Activated CD4-positive, alpha-beta memory T cell treated with anti-CD3 and anti-CD28 coated beads, Interleukin-2, amount 10 ng/mL, durations not matched to agents 7 days and 5 days (primary cell): ENCODE measurements at regions of chr13 and their contacts with region 1.

Region 1: DNA sequence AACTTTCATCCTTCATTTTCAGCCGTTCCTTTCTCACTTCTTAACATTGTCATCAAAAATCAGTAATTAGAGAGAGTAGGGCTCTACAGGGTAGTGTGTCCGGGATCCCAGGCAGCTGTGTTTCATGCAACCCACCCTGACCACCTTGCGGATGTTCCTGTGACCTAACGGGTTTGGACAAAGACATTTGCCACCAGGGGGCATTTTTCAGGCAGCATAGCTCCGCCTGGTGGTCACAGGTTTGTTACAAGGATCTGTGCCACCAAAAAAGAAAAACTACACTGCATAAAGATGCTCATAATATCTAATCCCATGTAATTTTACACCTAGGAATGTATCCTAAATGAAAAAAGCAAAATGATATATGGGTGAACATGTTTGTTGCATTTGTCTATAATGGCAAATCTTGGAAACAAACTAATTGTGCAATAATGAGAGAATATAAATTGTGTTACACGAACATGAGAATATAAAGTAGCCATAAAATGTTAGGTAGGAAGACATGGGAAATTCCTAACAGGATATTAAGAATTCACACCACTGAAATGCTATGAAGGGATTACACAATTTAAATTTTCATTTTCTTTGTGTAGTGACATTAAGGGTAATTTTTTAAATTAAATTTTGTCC is 123.0 kb downstream of the SLC7A1 start:
- DNase-seq: peak; percentile 59
- H3K4me3 Mint-ChIP-seq: no peak overlapping the region
- H3K27ac Mint-ChIP-seq: no peak overlapping the region
- H3K4me1 Mint-ChIP-seq: peaks cover 2% of the 10 kb centered on the region
- H3K27me3 Mint-ChIP-seq: peaks cover 12% of the 10 kb centered on the region

Region 2: DNA sequence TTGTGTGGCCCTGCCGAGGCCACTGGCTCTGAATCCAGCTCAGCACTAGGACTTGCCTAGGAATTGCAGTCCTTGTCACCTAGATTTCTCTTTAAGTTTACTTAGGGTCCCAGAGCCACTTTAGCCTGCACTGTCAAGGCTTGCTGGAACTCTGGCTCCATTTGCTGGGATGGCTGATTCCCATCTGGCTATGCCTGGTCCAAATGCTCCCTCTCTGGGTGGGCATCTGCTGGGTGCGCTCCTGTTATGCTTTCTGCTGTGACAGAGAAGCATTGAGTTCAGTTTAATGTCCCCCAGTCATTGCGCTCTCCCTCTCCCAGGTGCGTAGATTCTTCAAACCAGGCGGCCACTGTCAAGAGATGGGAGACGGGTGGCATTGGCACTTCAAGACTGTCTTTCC is 550.1 kb before region 1 on chr13:
- CTCF ChIA-PET with region 1: no interaction called
- POLR2A ChIA-PET with region 1: no interaction called
- DNase-seq: no peak
- H3K4me3 Mint-ChIP-seq: no peak overlapping the region
- H3K27ac Mint-ChIP-seq: no peak overlapping the region
- H3K4me1 Mint-ChIP-seq: no peaks in the 10 kb centered on the region
- H3K27me3 Mint-ChIP-seq: no peaks in the 10 kb centered on the region

Region 3: DNA sequence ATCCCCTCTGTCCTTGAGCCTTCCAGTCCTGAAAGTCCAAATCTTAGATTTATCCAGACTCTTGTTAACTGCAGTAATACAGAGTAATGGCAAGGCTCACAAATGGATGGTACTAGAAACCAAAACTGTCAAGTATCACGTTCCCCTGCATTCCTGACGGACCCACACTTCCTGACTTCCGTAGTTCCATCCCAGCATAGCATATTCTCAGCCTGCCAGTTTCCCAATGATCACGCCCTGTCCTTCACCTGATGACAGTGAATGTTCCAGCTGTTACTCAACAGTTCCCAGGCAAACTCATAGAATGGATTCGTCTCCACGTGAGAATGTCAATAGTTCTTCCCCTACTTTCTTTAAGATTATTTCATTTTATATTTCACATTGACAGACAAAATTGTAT is 89.5 kb after region 1 on chr13:
- CTCF ChIA-PET with region 1: no interaction called
- POLR2A ChIA-PET with region 1: no interaction called
- DNase-seq: no peak
- H3K4me3 Mint-ChIP-seq: no peak overlapping the region
- H3K27ac Mint-ChIP-seq: no peak overlapping the region
- H3K4me1 Mint-ChIP-seq: peaks cover 16% of the 10 kb centered on the region
- H3K27me3 Mint-ChIP-seq: no peaks in the 10 kb centered on the region

Region 4: DNA sequence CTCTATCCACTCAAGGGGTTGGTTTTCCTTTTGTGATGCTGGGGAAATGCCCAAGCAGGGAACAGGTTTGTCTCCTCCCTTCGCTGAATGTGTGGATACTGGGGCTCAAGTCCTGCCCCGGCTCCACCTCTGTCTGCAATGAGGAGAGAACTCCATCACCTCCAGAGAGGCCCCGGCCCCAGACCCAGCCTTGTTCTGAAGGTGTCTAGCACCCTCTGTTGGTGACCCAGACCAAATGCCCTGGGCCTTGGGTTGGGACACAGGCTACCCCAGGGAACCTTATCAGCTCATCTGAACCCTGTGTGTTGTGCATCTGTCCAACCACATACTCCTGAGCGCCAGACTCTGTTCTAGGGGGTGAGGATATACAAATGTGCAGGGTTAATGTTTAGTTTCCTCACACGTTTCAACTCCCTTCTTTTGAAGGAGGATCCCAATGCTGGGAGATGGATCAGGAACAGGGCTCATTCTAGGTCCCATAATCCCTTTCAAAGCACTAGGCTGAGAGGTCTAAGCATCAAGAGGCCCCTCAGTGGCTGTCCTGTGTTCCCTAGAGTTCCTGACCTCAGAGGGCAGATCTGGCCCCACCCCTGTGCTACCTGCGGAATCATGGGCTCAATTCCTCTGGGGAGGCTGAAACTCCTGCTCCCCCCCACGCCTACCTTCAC is 235.6 kb after region 1 on chr13:
- CTCF ChIA-PET with region 1: interaction called, 21 read pairs
- POLR2A ChIA-PET with region 1: no interaction called
- DNase-seq: peak; percentile 43
- H3K4me3 Mint-ChIP-seq: no peak overlapping the region
- H3K27ac Mint-ChIP-seq: no peak overlapping the region
- H3K4me1 Mint-ChIP-seq: no peaks in the 10 kb centered on the region
- H3K27me3 Mint-ChIP-seq: peaks cover 31% of the 10 kb centered on the region

Region 5: DNA sequence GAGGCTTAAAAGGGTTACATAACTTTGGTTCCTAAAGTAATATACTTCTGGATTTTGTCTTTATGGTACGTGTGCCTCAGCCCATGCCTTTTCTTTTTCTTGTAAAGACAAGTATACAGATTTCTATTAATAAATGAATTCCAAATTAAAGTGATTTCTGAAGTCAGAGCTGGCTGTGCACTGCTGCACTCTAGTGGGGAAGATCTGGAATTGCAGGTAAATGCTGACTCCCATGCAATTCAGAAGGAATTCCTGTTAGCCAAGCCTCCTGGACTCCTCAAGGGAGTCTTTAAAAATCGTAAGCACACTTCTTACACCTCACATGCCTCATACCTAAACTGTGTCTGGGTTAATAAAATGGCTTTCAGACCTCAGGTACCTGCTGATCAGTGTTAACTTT is 241.4 kb after region 1 on chr13:
- CTCF ChIA-PET with region 1: interaction called, 21 read pairs
- POLR2A ChIA-PET with region 1: no interaction called
- DNase-seq: no peak
- H3K4me3 Mint-ChIP-seq: no peak overlapping the region
- H3K27ac Mint-ChIP-seq: no peak overlapping the region
- H3K4me1 Mint-ChIP-seq: peaks cover 9% of the 10 kb centered on the region
- H3K27me3 Mint-ChIP-seq: peaks cover 26% of the 10 kb centered on the region